Psoas muscle (tissue), 8 donors: ENCODE measurements at regions of chr19 and their contacts with region 1.

Region 1: GRCh38 chr19:1825909-1826556 is 14.0 kb upstream of the ATP8B3 start:
- DNase-seq: peak; percentile 75 to 89
- ATAC-seq: peak; percentile 64 to 89 (median 81)
- H3K4me3 ChIP-seq: no peak overlapping the region
- H3K27ac ChIP-seq: no peak overlapping the region
- H3K4me1 ChIP-seq: peaks cover 5% of the 10 kb centered on the region
- H3K27me3 ChIP-seq: no peaks in the 10 kb centered on the region
- CTCF ChIP-seq: peak; percentile 81

Region 2: GRCh38 chr19:1540365-1540925 is 285.6 kb before region 1 on chr19:
- intact Hi-C with region 1: loop called in 1 of 2 experiments (anchors 10 kb)
- DNase-seq: no peak
- ATAC-seq: peak in 1 of 4 donors; percentile 35
- H3K4me3 ChIP-seq: no peak overlapping the region
- H3K27ac ChIP-seq: no peak overlapping the region
- H3K4me1 ChIP-seq: no peaks in the 10 kb centered on the region
- H3K27me3 ChIP-seq: peaks cover 0 to 16% (median 2%) of the 10 kb centered on the region in 3 donors
- CTCF ChIP-seq: no peak

Region 3: DNA sequence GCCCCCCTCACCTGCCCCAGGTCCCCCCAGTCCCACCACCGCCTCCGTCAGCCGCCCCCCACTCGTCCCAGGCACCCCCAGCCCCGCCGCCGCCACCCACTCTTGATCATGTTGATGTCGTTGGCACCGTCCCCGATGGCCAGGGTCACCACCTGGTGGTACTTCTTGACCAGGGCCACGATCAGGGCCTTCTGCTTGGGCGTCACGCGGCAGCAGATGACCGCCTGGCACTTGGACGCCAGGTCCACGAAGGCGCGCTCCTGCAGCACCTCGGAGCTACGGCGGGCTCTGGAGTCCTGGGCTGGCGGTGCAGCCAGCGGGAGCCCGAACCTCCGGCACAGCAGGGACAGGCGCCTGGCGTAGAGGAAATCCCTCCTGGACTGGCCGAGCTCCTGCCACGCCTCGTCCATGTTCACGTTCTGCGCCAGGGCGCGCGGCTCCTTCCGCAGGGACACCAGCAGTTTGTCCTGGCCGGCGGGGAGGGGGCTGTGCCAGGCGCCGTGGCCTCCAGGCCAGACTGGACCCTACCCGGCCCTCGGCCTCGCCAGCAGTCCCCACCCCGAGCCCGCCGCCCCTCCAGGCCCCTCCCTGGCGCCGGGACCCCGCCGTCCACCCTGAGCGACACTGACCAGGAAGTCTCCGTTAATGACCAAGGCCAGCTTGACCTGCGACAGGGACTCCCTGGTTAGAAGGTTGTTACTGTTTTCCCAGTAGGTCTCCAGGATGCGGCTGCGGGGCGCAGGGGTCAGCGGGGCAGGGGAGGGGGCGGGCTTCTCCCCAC is 36.6 kb before region 1 on chr19:
- intact Hi-C with region 1: no loop called
- DNase-seq: no peak
- ATAC-seq: peak in 1 of 4 donors; percentile 21
- H3K4me3 ChIP-seq: peak overlapping the region; percentile 18
- H3K27ac ChIP-seq: no peak overlapping the region
- H3K4me1 ChIP-seq: no peaks in the 10 kb centered on the region
- H3K27me3 ChIP-seq: peaks cover 0 to 44% (median 8%) of the 10 kb centered on the region in 3 donors
- CTCF ChIP-seq: no peak